Mucosa of descending colon (tissue), 3 donors: ENCODE measurements at regions of chr7 and their contacts with region 1.

Region 1: DNA sequence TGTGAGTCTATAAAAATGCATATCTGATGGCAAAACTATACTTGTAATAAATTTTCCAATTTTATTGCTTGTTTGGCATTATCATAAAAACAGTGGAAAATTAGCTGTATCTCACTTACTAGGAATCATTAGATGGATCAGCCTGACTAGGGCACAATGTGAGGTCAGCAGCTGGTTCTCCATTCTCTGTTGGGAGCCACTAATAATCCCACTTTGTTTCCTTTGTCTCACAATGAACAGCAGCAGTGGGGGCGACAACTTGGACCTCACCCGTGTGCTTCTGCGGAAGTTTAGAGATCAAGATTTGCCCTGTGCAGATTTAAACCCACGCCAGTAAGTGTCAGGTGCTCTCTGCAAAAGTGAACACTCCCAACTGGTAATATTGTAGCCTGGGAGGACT is 295.5 kb downstream of the ABCA13 start:
- DNase-seq: no peak
- ATAC-seq: no peak
- H3K4me3 ChIP-seq: no peak overlapping the region
- H3K4me1 ChIP-seq: no peaks in the 10 kb centered on the region
- CTCF ChIP-seq: no peak

Region 2: DNA sequence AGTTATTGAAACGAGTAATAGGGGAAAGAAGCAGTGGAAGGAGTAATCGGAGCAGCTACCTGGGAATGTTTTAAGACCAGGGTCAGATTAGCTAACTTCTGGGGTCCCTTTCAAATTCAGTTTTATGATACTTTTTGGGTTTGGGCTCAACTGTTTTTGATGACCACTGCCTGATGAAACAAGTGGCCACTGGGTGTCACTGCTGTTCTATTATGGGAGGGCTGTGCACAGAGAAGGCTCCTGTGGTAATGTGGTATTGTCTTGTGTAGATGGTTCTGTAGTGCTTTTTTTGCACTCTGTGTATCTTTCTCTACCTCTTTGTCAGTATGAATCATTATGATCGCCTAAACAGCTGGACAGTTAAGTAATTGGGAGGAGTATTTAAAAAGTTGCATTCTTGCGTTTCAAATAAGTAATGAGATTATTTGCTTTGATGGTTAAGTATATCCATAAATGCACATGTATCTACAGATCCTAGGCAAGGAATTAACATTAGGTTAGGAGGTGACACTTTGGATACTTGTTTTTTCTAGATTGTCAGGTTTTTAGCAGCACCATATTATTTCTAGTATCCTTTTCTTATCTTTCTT is 167.0 kb before region 1 on chr7:
- intact Hi-C with region 1: no loop called
- DNase-seq: peak in 2 of 3 donors; percentile 50 to 69
- ATAC-seq: peak; percentile 60
- H3K4me3 ChIP-seq: no peak overlapping the region
- H3K4me1 ChIP-seq: no peaks in the 10 kb centered on the region
- CTCF ChIP-seq: peak; percentile 33

Region 3: GRCh38 chr7:49579408-49580399 is 1113.0 kb after region 1 on chr7:
- intact Hi-C with region 1: loop called in 1 of 2 experiments (anchors 10 kb)
- DNase-seq: no peak
- ATAC-seq: no peak
- H3K4me3 ChIP-seq: no peak overlapping the region
- H3K4me1 ChIP-seq: no peaks in the 10 kb centered on the region
- CTCF ChIP-seq: no peak